ENCODE measurements at regions of chr10 and their contacts with region 1.

Region 1: GRCh38 chr10:74176380-74177139 is 25.5 kb downstream of the ADK start:
- DNase-seq: peak; percentile 93
- H3K4me3 Mint-ChIP-seq: peak overlapping the region; percentile 93
- H3K27ac Mint-ChIP-seq: peak overlapping the region; percentile 88
- H3K4me1 Mint-ChIP-seq: peaks cover 45% of the 10 kb centered on the region
- H3K27me3 Mint-ChIP-seq: no peaks in the 10 kb centered on the region

Region 2: DNA sequence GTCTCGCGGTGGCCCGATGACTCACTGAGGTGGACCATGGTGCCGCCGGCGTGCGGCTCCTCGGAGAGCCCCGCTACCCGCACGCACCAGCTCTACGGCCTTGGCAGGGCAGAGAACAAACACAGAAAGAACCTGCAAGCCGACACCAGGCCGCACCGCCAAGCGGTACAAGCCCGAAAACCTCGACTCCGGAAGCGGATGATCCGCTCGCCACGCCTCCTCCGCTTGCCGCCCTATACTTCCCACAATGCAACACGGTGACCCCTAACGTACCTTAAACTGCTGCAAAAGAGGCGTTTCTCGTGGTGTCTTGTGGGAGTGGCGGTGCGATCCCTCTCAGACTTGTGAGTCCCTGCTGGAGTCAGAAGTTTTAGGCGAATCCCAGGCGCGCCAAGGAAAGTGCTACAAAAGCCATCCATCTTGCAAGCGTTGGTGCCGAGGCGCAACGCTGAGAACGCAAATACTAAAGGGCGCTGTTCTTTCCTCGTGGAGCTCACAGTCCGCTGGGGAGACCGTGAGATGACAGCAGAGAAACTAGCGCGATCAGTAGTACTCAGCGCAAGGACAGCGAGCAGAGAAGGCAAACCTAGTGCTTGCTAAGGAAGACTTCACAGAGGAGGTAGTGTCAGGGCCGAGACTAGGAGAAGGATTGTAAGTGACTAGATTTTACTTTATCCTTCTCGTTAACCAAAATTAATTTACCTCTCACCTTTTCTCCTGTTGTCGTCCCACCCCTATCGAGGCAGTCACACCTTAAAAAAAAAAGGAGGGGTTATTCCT is 923.9 kb before region 1 on chr10 and contains the start of gene MRPS16:
- intact Hi-C with region 1: loop called (anchors 1 kb)
- DNase-seq: peak; percentile 92
- H3K4me3 Mint-ChIP-seq: peak within 1 kb of the TSS; percentile 97
- H3K27ac Mint-ChIP-seq: peak within 1 kb of the TSS; percentile 95
- H3K4me1 Mint-ChIP-seq: peaks cover 40% of the 10 kb centered on the region
- H3K27me3 Mint-ChIP-seq: no peaks in the 10 kb centered on the region
- total RNA-seq, gene MRPS16: 158 and 160 TPM in 2 replicates

Region 3: GRCh38 chr10:73997787-73998622 is 178.6 kb before region 1 on chr10 and contains the start of gene VCL:
- intact Hi-C with region 1: loop called (anchors 5 kb)
- DNase-seq: peak; percentile 95
- H3K4me3 Mint-ChIP-seq: peak within 1 kb of the TSS; percentile 98
- H3K27ac Mint-ChIP-seq: peak within 1 kb of the TSS; percentile 100
- H3K4me1 Mint-ChIP-seq: peaks cover 59% of the 10 kb centered on the region
- H3K27me3 Mint-ChIP-seq: no peaks in the 10 kb centered on the region
- total RNA-seq, gene VCL: 24.4 and 26.0 TPM in 2 replicates

Region 4: DNA sequence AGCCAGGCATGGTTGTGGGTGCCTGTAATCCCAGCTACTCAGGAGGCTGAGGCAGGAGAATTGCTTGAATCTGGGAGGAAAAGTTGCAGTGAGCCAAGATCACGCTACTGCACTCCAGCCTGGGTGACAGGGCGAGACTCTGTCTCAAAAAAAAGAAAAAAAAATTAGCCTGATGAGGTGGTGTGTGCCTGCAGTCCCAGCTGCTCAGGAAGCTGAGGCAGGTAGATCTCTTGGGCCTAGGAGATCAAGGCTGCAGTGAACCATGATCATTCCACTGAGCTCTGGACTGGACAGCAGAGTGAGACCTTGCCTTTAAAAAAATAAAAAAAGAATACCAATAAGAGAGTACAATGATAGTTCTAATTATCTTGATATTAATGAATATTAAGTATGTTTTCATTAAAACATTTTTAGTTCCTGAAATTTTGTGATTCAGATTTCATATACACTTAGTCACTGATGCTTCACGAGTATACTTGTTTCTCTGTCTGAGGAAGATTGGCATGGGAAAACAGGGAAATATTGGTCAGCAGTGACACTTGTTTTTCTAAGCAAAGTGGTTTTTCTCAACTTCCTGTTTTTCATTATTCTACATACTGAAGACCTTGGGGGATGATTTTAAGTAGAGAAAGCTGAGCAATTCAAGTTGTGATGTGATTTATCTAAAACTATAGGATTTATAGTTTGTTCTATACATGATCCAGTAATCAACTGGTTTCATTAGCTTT is 51.3 kb after region 1 on chr10:
- intact Hi-C with region 1: loop called (anchors 2 kb)
- DNase-seq: no peak
- H3K4me3 Mint-ChIP-seq: peak overlapping the region; percentile 16
- H3K27ac Mint-ChIP-seq: peak overlapping the region; percentile 85
- H3K4me1 Mint-ChIP-seq: peaks cover 40% of the 10 kb centered on the region
- H3K27me3 Mint-ChIP-seq: no peaks in the 10 kb centered on the region

Region 5: GRCh38 chr10:75111367-75111906 is 934.9 kb after region 1 on chr10 and contains the start of gene SAMD8:
- intact Hi-C with region 1: loop called (anchors 1 kb)
- DNase-seq: peak; percentile 97
- H3K4me3 Mint-ChIP-seq: peak within 1 kb of the TSS; percentile 95
- H3K27ac Mint-ChIP-seq: peak within 1 kb of the TSS; percentile 99
- H3K4me1 Mint-ChIP-seq: peaks cover 50% of the 10 kb centered on the region
- H3K27me3 Mint-ChIP-seq: no peaks in the 10 kb centered on the region
- total RNA-seq, gene SAMD8: 16.2 and 16.5 TPM in 2 replicates